HepG2 (cell line): ENCODE measurements at regions of chr4 and their contacts with region 1.

Region 1: GRCh38 chr4:17544205-17544604 is 29.2 kb downstream of the CLRN2 start:
- DNase-seq: peak; percentile 98
- ATAC-seq: peak; percentile 97
- H3K4me3 ChIP-seq: no peak overlapping the region
- H3K27ac ChIP-seq: peak overlapping the region; percentile 78
- H3K4me1 ChIP-seq: peaks cover 51% of the 10 kb centered on the region
- H3K27me3 ChIP-seq: no peaks in the 10 kb centered on the region
- CTCF ChIP-seq: no peak
- EP300 ChIP-seq: peak in 1 of 2 experiments; percentile 93; a peak in 2 of 4 replicates
- POLR2A ChIP-seq: no peak
- RAD21 ChIP-seq: no peak

Region 2: GRCh38 chr4:17529452-17529964 is 14.7 kb before region 1 on chr4:
- CTCF ChIA-PET with region 1: no interaction called
- POLR2A ChIA-PET with region 1: no interaction called
- in situ Hi-C with region 1: no loop called
- intact Hi-C with region 1: loop called (anchors 1 kb)
- DNase-seq: no peak
- ATAC-seq: no peak
- H3K4me3 ChIP-seq: no peak overlapping the region
- H3K27ac ChIP-seq: no peak overlapping the region
- H3K4me1 ChIP-seq: peaks cover 42% of the 10 kb centered on the region
- H3K27me3 ChIP-seq: no peaks in the 10 kb centered on the region
- CTCF ChIP-seq: no peak
- EP300 ChIP-seq: no peak
- POLR2A ChIP-seq: no peak
- RAD21 ChIP-seq: no peak

Region 3: DNA sequence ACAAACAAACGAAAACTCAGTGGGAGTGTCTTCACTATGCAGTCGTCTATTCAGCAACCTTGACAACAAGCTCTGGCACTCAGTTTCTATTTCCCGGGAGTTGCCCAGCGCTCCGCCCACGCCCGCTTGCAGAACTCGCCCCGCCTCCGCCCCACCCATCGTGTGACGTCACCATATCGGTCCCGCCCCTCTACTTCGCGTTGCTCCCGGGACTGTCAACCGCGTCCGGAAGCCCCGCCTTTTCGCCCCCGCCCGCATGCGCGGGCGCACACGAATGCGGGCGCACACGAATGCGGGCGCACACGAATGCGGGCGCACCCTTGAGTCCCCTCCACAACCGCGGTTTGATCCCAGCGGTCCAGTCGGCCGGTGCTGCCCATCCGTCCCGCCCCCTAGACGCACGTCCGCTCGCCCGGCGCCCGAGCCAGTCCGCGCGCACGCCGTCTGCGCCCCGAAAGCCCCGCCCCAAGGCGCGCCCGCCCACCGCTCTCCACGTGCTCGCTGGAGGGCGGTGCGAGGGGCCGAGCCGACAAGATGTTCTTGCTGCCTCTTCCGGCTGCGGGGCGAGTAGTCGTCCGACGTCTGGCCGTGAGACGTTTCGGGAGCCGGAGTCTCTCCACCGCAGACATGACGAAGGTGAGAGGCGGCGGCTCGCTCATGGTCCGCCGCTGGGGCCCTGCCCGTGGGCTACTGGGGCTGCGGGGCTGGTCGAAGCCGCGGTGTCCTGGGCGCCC is 32.9 kb after region 1 on chr4 and contains the start of gene LAP3:
- CTCF ChIA-PET with region 1: interaction called, 5 read pairs
- POLR2A ChIA-PET with region 1: interaction called, 6 read pairs
- in situ Hi-C with region 1: no loop called
- intact Hi-C with region 1: loop called (anchors 1 kb)
- DNase-seq: peak; percentile 90
- ATAC-seq: peak; percentile 94
- H3K4me3 ChIP-seq: peak within 1 kb of the TSS; percentile 87 to 91 (median 91)
- H3K27ac ChIP-seq: peak within 1 kb of the TSS; percentile 75
- H3K4me1 ChIP-seq: peaks cover 63% of the 10 kb centered on the region
- H3K27me3 ChIP-seq: no peaks in the 10 kb centered on the region; a peak in 1 of 5 replicates
- CTCF ChIP-seq: peak; percentile 18; the same call in 1 of the 2 replicates
- EP300 ChIP-seq: no peak
- POLR2A ChIP-seq: peak; percentile 89 to 92
- RAD21 ChIP-seq: peak; percentile 43
- total RNA-seq, gene LAP3: 125 and 177 TPM in 2 replicates

Region 4: GRCh38 chr4:17597517-17597916 is 53.3 kb after region 1 on chr4:
- CTCF ChIA-PET with region 1: interaction called, 4 read pairs
- POLR2A ChIA-PET with region 1: no interaction called
- in situ Hi-C with region 1: no loop called
- intact Hi-C with region 1: loop called (anchors 1 kb)
- DNase-seq: no peak
- ATAC-seq: peak; percentile 92
- H3K4me3 ChIP-seq: no peak overlapping the region
- H3K27ac ChIP-seq: no peak overlapping the region
- H3K4me1 ChIP-seq: no peaks in the 10 kb centered on the region
- H3K27me3 ChIP-seq: no peaks in the 10 kb centered on the region
- CTCF ChIP-seq: peak; percentile 57
- EP300 ChIP-seq: no peak
- POLR2A ChIP-seq: no peak
- RAD21 ChIP-seq: peak; percentile 29; the same call in 1 of the 2 replicates

Region 5: GRCh38 chr4:17636696-17637622 is 92.8 kb after region 1 on chr4:
- CTCF ChIA-PET with region 1: interaction called, 20 read pairs
- POLR2A ChIA-PET with region 1: no interaction called
- in situ Hi-C with region 1: no loop called
- intact Hi-C with region 1: loop called (anchors 1 kb)
- DNase-seq: peak; percentile 64
- ATAC-seq: peak; percentile 94
- H3K4me3 ChIP-seq: no peak overlapping the region
- H3K27ac ChIP-seq: no peak overlapping the region
- H3K4me1 ChIP-seq: peaks cover 9% of the 10 kb centered on the region; the same call in 1 of the 2 replicates
- H3K27me3 ChIP-seq: no peaks in the 10 kb centered on the region
- CTCF ChIP-seq: peak; percentile 89
- EP300 ChIP-seq: no peak
- POLR2A ChIP-seq: no peak
- RAD21 ChIP-seq: peak; percentile 91

Region 6: GRCh38 chr4:17700982-17701839 is 157.0 kb after region 1 on chr4:
- CTCF ChIA-PET with region 1: no interaction called
- POLR2A ChIA-PET with region 1: no interaction called
- in situ Hi-C with region 1: no loop called
- intact Hi-C with region 1: no loop called
- DNase-seq: no peak
- ATAC-seq: no peak
- H3K4me3 ChIP-seq: no peak overlapping the region
- H3K27ac ChIP-seq: no peak overlapping the region
- H3K4me1 ChIP-seq: no peaks in the 10 kb centered on the region
- H3K27me3 ChIP-seq: peaks cover 0 to 3% of the 10 kb centered on the region in 2 experiments; a peak in 1 of 5 replicates
- CTCF ChIP-seq: no peak
- EP300 ChIP-seq: no peak
- POLR2A ChIP-seq: no peak
- RAD21 ChIP-seq: no peak

Region 7: GRCh38 chr4:19375136-19375804 is 1831.1 kb after region 1 on chr4:
- CTCF ChIA-PET with region 1: no interaction called
- POLR2A ChIA-PET with region 1: no interaction called
- in situ Hi-C with region 1: no loop called
- intact Hi-C with region 1: no loop called
- DNase-seq: no peak
- ATAC-seq: no peak
- H3K4me3 ChIP-seq: no peak overlapping the region
- H3K27ac ChIP-seq: no peak overlapping the region
- H3K4me1 ChIP-seq: no peaks in the 10 kb centered on the region
- H3K27me3 ChIP-seq: no peaks in the 10 kb centered on the region
- CTCF ChIP-seq: no peak
- EP300 ChIP-seq: no peak
- POLR2A ChIP-seq: no peak
- RAD21 ChIP-seq: no peak